ENCODE measurements at regions of chr12 and their contacts with region 1.

Region 1: DNA sequence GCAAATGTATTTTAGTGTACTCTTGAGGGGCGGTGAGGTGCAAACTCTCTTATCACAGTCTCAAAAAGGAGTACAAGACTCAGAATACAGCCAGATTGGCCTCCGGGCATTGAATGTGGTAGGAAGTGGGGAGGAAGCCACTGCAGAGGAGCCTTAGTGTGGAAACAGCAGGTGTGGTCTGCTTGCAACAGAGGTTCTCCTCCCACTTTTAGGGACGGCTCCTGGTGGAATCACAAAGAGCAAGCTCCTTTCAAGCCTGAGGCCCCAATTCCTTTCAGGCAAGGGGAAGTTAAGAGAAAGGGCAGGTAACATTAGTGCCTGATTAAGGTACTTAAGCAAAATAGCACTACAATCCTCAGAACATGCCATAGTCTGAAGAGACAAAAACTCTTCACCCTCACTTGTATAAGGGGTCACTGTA is 23.7 kb upstream of the SLC2A3 start:
- DNase-seq: peak; percentile 70
- ATAC-seq: peak; percentile 53
- H3K4me3 ChIP-seq: peak overlapping the region; percentile 87
- H3K27ac ChIP-seq: peak overlapping the region; percentile 71
- H3K4me1 ChIP-seq: peaks cover 18% of the 10 kb centered on the region
- H3K27me3 ChIP-seq: no peaks in the 10 kb centered on the region
- CTCF ChIP-seq: no peak
- EP300 ChIP-seq: peak in 1 of 2 experiments; percentile 30; a peak in 1 of 4 replicates
- POLR2A ChIP-seq: no peak
- RAD21 ChIP-seq: no peak

Region 2: GRCh38 chr12:7884689-7885088 is 75.0 kb before region 1 on chr12:
- CTCF ChIA-PET with region 1: no interaction called
- POLR2A ChIA-PET with region 1: no interaction called
- RAD21 ChIA-PET with region 1: no interaction called
- SMC1A ChIA-PET with region 1: no interaction called
- in situ Hi-C with region 1: no loop called
- intact Hi-C with region 1: no loop called
- DNase-seq: no peak
- ATAC-seq: no peak
- H3K4me3 ChIP-seq: no peak overlapping the region
- H3K27ac ChIP-seq: no peak overlapping the region
- H3K4me1 ChIP-seq: no peaks in the 10 kb centered on the region
- H3K27me3 ChIP-seq: no peaks in the 10 kb centered on the region
- CTCF ChIP-seq: no peak
- EP300 ChIP-seq: no peak
- POLR2A ChIP-seq: no peak
- RAD21 ChIP-seq: no peak

Region 3: DNA sequence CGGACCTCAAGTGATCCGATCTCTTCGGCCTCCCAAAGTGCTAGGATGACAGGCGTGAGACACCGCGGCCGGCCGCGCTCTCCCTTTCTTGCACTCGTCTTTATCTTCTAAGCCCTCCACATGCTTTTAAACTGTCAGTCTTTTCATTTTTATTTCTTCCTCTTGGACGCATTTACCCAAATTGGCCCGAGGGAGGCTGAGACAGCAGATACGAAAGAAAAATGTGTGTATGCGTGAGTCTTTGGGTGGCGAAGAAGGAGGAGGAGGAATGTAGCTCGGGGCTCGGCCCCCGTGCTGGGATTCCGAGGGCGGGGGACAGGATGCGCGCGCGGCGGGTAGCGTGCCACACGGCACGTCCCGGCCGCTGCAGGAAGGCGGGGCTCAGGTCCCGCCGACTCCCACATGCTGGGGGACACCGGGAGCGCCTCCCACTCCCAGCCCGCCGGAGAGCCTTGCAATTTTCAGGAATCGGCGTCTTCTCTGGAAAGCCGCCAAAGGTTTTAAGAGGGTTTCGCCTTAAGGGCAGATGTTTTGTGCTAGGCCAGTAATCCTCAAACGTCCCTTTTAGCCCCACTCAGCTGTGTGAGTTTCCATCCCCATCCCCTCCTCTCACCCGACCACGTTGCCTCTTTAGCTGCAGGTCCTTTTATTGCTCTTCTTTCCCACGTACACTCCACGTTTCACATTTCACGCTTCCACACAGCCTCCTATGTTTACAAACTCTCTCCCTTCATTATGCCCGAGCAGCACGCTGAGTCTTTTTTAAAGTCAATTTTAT is 11.0 kb after region 1 on chr12:
- CTCF ChIA-PET with region 1: interaction called, 20 read pairs
- POLR2A ChIA-PET with region 1: interaction called, 60 read pairs
- RAD21 ChIA-PET with region 1: interaction called, 25 read pairs
- SMC1A ChIA-PET with region 1: interaction called, 17 read pairs
- in situ Hi-C with region 1: no loop called
- intact Hi-C with region 1: loop called (anchors 1 kb)
- DNase-seq: peak; percentile 73
- ATAC-seq: peak; percentile 98
- H3K4me3 ChIP-seq: peak overlapping the region; percentile 92
- H3K27ac ChIP-seq: peak overlapping the region; percentile 75
- H3K4me1 ChIP-seq: peaks cover 12% of the 10 kb centered on the region
- H3K27me3 ChIP-seq: no peaks in the 10 kb centered on the region
- CTCF ChIP-seq: no peak
- EP300 ChIP-seq: peak in 1 of 2 experiments; percentile 25; a peak in 2 of 4 replicates
- POLR2A ChIP-seq: peak; percentile 67
- RAD21 ChIP-seq: no peak

Region 4: DNA sequence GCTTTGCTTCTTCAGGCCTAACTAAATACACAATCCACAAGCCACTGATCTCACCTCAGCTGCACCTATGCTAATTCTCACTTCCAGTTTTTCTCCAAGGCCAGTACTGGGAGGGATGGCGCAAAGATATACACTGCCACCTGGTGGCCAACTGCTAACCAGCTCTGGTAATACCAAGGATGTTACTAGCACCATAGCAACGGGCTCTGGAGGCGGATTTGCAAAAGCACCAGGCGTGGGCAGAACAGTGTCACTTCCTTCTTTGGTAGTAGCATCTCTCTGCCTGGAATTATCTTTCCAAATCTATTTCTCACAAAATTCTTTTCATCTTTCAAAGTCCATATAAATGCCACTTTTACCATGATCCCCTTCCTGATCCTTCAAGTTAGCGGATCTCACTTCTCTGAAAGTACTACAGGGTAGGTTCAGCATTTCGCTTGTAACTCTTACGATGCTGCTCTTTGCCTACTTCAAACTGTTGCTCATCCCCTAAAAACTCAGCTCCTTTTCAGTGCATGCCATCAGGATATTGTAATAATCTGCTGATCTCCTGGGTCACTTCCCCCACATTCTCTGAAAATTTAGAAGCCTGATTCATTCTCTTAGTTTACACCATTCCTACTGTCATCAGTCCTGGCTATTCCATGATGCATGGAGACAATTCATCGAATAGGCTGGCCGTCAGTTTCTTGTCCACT is 35.7 kb after region 1 on chr12:
- CTCF ChIA-PET with region 1: interaction called, 6 read pairs
- POLR2A ChIA-PET with region 1: interaction called, 4 read pairs
- RAD21 ChIA-PET with region 1: interaction called, 5 read pairs
- SMC1A ChIA-PET with region 1: interaction called, 23 read pairs
- in situ Hi-C with region 1: no loop called
- intact Hi-C with region 1: loop called (anchors 2 kb)
- DNase-seq: peak; percentile 69
- ATAC-seq: peak; percentile 100
- H3K4me3 ChIP-seq: no peak overlapping the region
- H3K27ac ChIP-seq: no peak overlapping the region
- H3K4me1 ChIP-seq: peaks cover 10% of the 10 kb centered on the region
- H3K27me3 ChIP-seq: no peaks in the 10 kb centered on the region
- CTCF ChIP-seq: peak; percentile 68 to 83 (median 69)
- EP300 ChIP-seq: peak; percentile 13 to 51; a peak in 1 of 4 replicates
- POLR2A ChIP-seq: no peak
- RAD21 ChIP-seq: peak; percentile 83

Region 5: GRCh38 chr12:8018666-8019581 is 59.2 kb after region 1 on chr12:
- CTCF ChIA-PET with region 1: no interaction called
- POLR2A ChIA-PET with region 1: no interaction called
- RAD21 ChIA-PET with region 1: no interaction called
- SMC1A ChIA-PET with region 1: no interaction called
- in situ Hi-C with region 1: no loop called
- intact Hi-C with region 1: no loop called
- DNase-seq: no peak
- ATAC-seq: peak; percentile 47
- H3K4me3 ChIP-seq: peak overlapping the region; percentile 36; the same call in 1 of the 2 replicates
- H3K27ac ChIP-seq: no peak overlapping the region
- H3K4me1 ChIP-seq: no peaks in the 10 kb centered on the region; the same call in 1 of the 2 replicates
- H3K27me3 ChIP-seq: peaks cover 0 to 7% of the 10 kb centered on the region in 2 experiments
- CTCF ChIP-seq: no peak
- EP300 ChIP-seq: no peak
- POLR2A ChIP-seq: no peak
- RAD21 ChIP-seq: no peak